ENCODE measurements at regions of chr19 and their contacts with region 1.

Region 1: GRCh38 chr19:44207126-44207803 is 5.1 kb upstream of the ZNF227 start:
- DNase-seq: peak; percentile 94
- H3K4me3 Mint-ChIP-seq: peak overlapping the region; percentile 95
- H3K27ac Mint-ChIP-seq: peak overlapping the region; percentile 80
- H3K4me1 Mint-ChIP-seq: peaks cover 10% of the 10 kb centered on the region
- H3K27me3 Mint-ChIP-seq: peaks cover 2% of the 10 kb centered on the region

Region 2: GRCh38 chr19:44071824-44072542 is 135.3 kb before region 1 on chr19 and contains the start of gene ZNF284:
- intact Hi-C with region 1: loop called (anchors 1 kb)
- DNase-seq: peak; percentile 94
- H3K4me3 Mint-ChIP-seq: peak within 1 kb of the TSS; percentile 91
- H3K27ac Mint-ChIP-seq: peak within 1 kb of the TSS; percentile 73
- H3K4me1 Mint-ChIP-seq: peaks cover 13% of the 10 kb centered on the region
- H3K27me3 Mint-ChIP-seq: no peaks in the 10 kb centered on the region
- total RNA-seq, gene ZNF284: 1.2 TPM in 2 replicates

Region 3: GRCh38 chr19:44141191-44142058 is 65.8 kb before region 1 on chr19 and contains the start of gene ZNF234:
- intact Hi-C with region 1: no loop called
- DNase-seq: peak; percentile 90
- H3K4me3 Mint-ChIP-seq: peak within 1 kb of the TSS; percentile 92
- H3K27ac Mint-ChIP-seq: peak within 1 kb of the TSS; percentile 94
- H3K4me1 Mint-ChIP-seq: peaks cover 15% of the 10 kb centered on the region
- H3K27me3 Mint-ChIP-seq: no peaks in the 10 kb centered on the region
- total RNA-seq, gene ZNF234: 10.9 and 12.9 TPM in 2 replicates